ENCODE measurements at regions of chr12 and their contacts with region 1.

Region 1: DNA sequence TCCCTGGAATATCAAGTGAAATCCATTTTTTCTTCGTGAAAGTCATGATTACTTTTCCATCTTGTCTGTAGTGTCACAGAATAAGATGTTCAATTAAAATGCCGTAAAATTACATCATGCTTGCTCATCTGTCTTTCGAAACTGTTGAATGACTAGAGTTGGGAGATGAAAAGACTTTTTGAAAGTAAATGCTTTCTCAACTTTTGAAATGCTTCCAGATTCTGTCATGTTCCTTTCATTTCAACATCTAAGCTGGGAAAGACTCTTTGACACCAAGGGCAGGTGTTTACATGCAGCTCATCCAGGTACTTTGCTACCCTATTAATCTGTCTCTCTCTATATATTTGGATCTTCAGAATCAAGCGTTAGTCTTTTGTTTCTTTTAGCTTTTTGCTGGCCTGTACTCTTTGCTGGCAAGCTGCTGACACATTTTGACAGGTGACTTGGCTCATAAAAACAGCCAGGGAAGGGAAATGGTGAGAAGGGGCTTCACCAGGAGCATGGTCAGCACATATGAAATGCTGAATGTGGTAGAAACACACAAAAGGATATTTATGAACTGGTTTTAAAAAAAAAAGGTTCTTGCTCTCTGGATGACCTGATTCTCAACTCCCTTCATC is 77.0 kb upstream of the METAP2 start:
- DNase-seq: peak; percentile 21
- H3K4me3 Mint-ChIP-seq: no peak overlapping the region
- H3K27ac Mint-ChIP-seq: peak overlapping the region; percentile 54
- H3K4me1 Mint-ChIP-seq: peaks cover 22% of the 10 kb centered on the region
- H3K27me3 Mint-ChIP-seq: peaks cover 25% of the 10 kb centered on the region

Region 2: DNA sequence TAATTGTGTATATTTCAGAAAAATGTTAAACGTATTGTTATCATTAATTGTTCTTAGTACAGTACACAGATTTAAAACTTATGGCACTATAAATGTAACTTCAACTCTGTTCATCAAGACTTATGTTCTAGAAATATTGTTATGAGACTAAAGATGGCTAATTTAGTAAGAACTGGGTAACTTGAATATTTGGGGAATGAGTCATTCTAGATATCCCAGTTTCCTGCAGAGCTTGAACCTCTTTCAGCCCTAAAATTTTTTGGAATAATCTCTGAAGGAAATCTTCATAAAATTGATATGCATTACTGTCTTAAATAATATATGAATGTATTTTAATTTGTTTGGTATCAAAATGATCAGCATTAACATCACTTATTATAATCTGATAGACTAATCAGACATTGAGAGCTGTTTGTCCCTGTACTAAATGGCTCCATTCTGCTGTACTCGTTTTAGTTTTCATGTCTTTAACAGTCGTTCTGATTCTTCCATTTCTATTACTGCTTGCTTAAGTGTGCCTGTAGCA is 92.2 kb before region 1 on chr12:
- CTCF ChIA-PET with region 1: no interaction called
- intact Hi-C with region 1: loop called (anchors 2 kb)
- DNase-seq: no peak
- H3K4me3 Mint-ChIP-seq: no peak overlapping the region
- H3K27ac Mint-ChIP-seq: no peak overlapping the region
- H3K4me1 Mint-ChIP-seq: peaks cover 13% of the 10 kb centered on the region
- H3K27me3 Mint-ChIP-seq: no peaks in the 10 kb centered on the region

Region 3: DNA sequence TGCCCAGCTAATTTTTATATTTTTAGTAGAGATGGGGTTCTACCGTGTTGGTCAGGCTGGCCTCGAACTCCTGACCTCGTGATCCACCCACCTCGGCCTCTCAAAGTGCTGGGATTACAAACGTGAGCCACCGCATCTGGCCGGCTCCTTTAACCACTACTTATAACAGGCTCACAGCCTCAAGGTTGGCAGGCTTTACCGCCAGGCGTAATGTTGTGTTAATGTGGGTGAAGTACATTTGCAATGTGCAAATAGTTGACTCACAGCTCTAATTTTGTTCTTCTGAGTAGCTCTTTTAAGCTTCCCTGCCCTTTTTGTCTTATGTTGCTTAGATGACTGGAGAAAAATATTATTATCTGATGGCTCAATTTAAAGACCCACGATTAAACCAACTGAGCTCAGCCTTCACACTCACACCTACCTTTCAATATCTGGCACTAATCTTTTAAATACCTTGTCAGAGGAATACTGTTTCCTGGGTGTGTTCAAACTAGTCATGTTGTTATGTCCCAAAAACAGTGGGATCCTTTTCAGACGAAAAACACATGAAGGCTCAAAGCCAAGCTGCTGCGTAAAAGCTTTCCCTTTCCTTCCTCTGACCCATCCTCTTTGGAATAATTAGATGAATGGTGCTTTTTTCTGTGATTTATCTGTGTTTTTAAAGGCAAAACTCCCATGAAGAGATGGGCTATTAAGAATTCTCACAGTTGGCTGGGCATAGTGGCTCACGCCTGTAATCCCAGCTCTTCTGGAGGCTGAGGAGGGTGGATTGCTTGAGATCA is 211.5 kb after region 1 on chr12:
- CTCF ChIA-PET with region 1: no interaction called
- intact Hi-C with region 1: loop called (anchors 1 kb)
- DNase-seq: no peak
- H3K4me3 Mint-ChIP-seq: no peak overlapping the region
- H3K27ac Mint-ChIP-seq: no peak overlapping the region
- H3K4me1 Mint-ChIP-seq: peaks cover 3% of the 10 kb centered on the region
- H3K27me3 Mint-ChIP-seq: peaks cover 3% of the 10 kb centered on the region

Region 4: DNA sequence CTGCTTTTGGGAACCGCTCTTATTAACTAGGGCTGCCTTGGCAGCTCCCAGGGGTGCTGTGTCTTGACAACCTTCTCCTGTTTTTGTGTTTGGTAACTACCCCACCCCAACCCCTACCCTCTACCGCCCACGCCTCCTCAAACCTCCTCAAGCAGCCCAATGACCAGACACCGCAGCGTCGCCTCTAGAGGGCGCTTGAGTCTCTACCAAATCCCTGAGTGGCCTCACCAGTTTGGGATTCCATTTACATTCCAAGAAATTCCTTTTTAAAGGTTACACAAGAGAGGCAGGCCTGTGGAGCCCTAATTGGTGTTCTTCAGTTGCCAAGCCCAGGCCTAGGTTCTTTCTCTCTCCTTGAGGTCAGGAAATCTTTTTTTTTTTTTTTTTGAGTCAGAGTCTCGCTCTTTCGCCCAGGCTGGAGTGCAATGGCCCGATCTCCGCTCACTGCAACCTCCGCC is 226.7 kb after region 1 on chr12:
- CTCF ChIA-PET with region 1: no interaction called
- intact Hi-C with region 1: no loop called
- DNase-seq: peak; percentile 44
- H3K4me3 Mint-ChIP-seq: no peak overlapping the region
- H3K27ac Mint-ChIP-seq: no peak overlapping the region
- H3K4me1 Mint-ChIP-seq: no peaks in the 10 kb centered on the region
- H3K27me3 Mint-ChIP-seq: no peaks in the 10 kb centered on the region

Measured in activated naive CD4-positive, alpha-beta T cell treated with anti-CD3 and anti-CD28 coated beads for 36 hours (primary cell).